Ovary (tissue), 10 donors: ENCODE measurements at regions of chr17 and their contacts with region 1.

Region 1: DNA sequence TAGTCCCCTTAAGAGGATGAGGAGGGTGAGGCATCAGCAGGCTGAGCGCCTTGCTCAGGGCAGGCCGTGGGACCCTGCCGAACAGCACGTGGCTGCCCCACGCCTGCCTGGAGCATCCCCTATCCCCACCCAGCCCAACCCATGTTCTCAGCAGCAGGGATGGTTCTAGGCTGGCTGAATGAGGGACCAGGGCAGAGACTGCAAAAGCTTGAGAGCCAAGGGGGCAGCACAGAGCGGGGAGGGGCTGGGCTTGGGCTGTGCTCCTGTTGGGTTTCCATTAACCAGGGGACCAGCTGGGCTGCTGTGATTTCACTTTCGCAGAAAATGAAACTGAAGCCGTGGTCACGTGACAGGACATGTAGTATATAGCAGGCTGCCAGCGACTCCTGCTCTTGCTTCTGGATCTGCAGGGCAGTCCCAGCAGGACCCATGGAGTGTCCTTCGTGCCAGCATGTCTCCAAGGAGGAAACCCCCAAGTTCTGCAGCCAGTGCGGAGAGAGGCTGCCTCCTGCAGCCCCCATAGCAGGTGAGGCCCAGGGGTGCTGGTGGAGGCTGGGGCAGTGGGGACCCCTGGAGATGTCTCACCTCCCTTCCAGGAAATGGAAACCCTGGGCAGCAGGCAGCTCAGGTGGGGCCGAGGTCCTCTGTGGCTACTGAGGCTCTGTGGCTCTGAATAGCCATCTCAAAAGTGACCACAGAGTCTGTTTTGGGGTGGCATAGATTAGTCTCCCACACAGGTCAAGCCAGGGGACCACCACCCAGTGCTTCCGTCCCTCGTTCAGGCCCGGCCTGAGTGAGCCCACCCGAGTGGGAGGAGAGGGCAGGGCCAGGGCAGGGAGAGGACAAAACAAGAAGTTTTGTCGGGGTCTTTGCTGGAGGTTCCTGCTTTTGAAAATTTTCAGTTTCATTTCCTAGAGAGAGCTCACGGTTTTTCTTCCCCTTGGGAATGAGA is 2.9 kb downstream of the RNF213 start:
- DNase-seq: peak; percentile 82 to 89 (median 85)
- H3K4me3 ChIP-seq: peak overlapping the region; percentile 32
- H3K27ac ChIP-seq: peak overlapping the region in 1 of 2 donors; percentile 96
- H3K4me1 ChIP-seq: peaks cover 16% of the 10 kb centered on the region
- H3K27me3 ChIP-seq: no peaks in the 10 kb centered on the region
- CTCF ChIP-seq: no peak
- EP300 ChIP-seq: no peak
- POLR2A ChIP-seq: no peak

Region 2: GRCh38 chr17:80092959-80093358 is 170.6 kb before region 1 on chr17:
- intact Hi-C with region 1: no loop called
- DNase-seq: no peak
- H3K4me3 ChIP-seq: no peak overlapping the region
- H3K27ac ChIP-seq: no peak overlapping the region
- H3K4me1 ChIP-seq: no peaks in the 10 kb centered on the region
- H3K27me3 ChIP-seq: no peaks in the 10 kb centered on the region
- CTCF ChIP-seq: no peak
- EP300 ChIP-seq: no peak
- POLR2A ChIP-seq: no peak

Region 3: GRCh38 chr17:80219763-80220725 is 43.5 kb before region 1 on chr17 and contains the starts of genes SGSH and SLC26A11:
- intact Hi-C with region 1: loop called in 1 of 4 experiments (anchors 2 kb)
- DNase-seq: peak; percentile 80 to 88 (median 85)
- H3K4me3 ChIP-seq: peak within 1 kb of the TSS; percentile 99
- H3K27ac ChIP-seq: peak within 1 kb of the TSS; percentile 26 to 65
- H3K4me1 ChIP-seq: peaks cover 10% of the 10 kb centered on the region
- H3K27me3 ChIP-seq: no peaks in the 10 kb centered on the region
- CTCF ChIP-seq: peak in 1 of 3 donors; percentile 10
- EP300 ChIP-seq: no peak
- POLR2A ChIP-seq: peak; percentile 25
- total RNA-seq, gene SGSH: 10.8 to 39.9 (median 30.6) TPM
- total RNA-seq, gene SLC26A11: 18.4 to 30.3 (median 24.2) TPM